Sciatic nerve (tissue), 2 donors: ENCODE measurements at regions of chr9 and their contacts with region 1.

Region 1: DNA sequence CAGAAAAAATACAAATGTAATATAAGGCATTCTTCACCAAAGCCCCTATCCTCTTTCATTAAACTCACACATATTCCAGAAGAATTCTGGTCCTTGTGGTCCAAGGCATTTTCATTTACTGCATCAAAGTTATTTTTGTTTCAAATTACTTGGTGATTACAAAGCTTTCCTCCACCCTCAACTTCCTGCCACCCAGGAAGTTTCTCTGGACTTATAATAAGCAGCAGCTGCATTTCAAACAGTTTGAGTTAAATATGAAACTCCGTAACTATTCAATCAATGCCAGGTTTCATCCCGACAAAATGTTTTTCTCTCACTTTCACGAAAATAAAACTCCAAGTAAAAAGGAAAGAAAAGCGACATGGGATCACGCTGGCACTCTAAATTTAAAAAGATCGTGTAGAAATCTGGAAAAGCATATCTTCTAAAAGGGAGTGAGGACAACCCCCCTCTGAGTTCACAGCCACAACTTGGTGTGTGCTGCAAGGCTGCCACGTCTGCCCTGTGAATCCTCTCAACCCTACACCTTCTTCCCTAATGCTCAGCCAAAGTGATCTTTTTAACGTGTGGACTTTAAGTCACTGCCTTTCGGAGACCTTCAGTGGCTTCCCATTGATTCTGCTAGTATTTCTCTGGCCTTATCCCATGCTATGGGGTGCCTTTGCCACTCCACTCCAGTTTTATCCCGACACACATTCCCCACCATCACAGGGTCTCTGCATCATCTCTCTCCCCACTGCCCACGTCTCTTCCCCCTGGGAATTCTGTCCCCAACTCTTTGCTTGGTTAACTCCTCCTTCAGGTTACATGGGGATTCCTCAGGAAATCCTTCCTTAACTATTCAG is 91.0 kb upstream of the CER1 start:
- DNase-seq: no peak
- ATAC-seq: peak; percentile 45

Region 2: GRCh38 chr9:13769006-13769405 is 1044.6 kb before region 1 on chr9:
- intact Hi-C with region 1: loop called (anchors 10 kb)
- DNase-seq: no peak
- ATAC-seq: no peak